Activated T-helper 2 cell treated with anti-CD3 and anti-CD28 coated beads, Interferon-gamma antibody, Interleukin-2, Interleukin-4, amounts not matched to agents 10 μg/mL and 5 μg/mL and 100 μg/mL, durations not matched to agents 14 hours and 24 hours and 36 hours (primary cell): ENCODE measurements at regions of chr13 and their contacts with region 1.

Region 1: GRCh38 chr13:40597740-40598370 is 68.6 kb downstream of the FOXO1 start:
- DNase-seq: no peak
- H3K4me3 Mint-ChIP-seq: peak overlapping the region; percentile 7
- H3K27ac Mint-ChIP-seq: peak overlapping the region; percentile 47
- H3K4me1 Mint-ChIP-seq: peaks cover 67% of the 10 kb centered on the region
- H3K27me3 Mint-ChIP-seq: no peaks in the 10 kb centered on the region

Region 2: GRCh38 chr13:40613192-40613818 is 15.4 kb after region 1 on chr13:
- intact Hi-C with region 1: loop called (anchors 2 kb)
- DNase-seq: peak; percentile 55
- H3K4me3 Mint-ChIP-seq: peak overlapping the region; percentile 80
- H3K27ac Mint-ChIP-seq: peak overlapping the region; percentile 95
- H3K4me1 Mint-ChIP-seq: peaks cover 64% of the 10 kb centered on the region
- H3K27me3 Mint-ChIP-seq: no peaks in the 10 kb centered on the region

Region 3: DNA sequence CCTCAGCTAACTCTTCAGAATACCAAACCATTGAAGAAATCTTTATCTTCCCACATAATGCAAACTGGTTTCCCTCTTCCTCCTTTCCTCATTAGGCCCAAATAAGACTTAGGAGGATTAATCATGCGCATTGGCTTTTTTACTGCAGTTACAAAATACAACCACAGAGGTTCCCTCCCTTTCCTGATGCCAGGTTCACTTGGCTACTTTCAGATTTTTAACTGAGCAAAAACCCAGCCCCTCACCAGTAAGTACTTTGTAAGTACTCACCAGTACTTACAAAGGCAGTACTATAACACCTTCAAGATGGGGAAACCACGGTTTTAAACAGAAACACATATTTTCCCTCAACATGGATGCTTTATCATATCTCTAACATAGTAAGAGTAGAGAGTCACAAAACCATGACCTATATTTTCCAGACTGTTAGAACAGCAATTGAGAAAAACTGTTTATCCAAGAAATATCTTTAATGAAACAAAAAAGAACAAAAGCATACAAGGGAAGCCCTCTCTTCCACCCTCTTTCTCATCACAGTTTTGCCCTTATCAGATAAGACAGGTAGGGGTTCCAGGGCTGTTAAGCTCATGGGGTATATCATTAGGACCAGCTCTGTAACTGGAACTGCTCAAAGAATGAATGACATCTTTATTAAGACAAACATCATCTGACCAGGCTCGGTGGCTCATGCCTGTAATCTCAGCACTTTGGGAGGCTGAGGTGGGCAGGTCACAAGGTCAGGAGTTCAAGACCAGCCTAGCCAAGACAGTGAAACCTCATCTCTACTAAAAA is 55.9 kb after region 1 on chr13:
- intact Hi-C with region 1: no loop called
- DNase-seq: no peak
- H3K4me3 Mint-ChIP-seq: peak overlapping the region; percentile 65
- H3K27ac Mint-ChIP-seq: peak overlapping the region; percentile 93
- H3K4me1 Mint-ChIP-seq: peaks cover 71% of the 10 kb centered on the region
- H3K27me3 Mint-ChIP-seq: no peaks in the 10 kb centered on the region